Panc1 (cell line): ENCODE measurements at regions of chr1 and their contacts with region 1.

Region 1: GRCh38 chr1:155978325-155978972 is at the start of gene ARHGEF2:
- DNase-seq: no peak
- ATAC-seq: peak; percentile 85
- H3K4me3 ChIP-seq: peak within 1 kb of the TSS; percentile 82 to 89
- H3K27ac ChIP-seq: peak within 1 kb of the TSS; percentile 99
- H3K4me1 ChIP-seq: peaks cover 61% of the 10 kb centered on the region
- H3K27me3 ChIP-seq: no peaks in the 10 kb centered on the region
- CTCF ChIP-seq: no peak
- total RNA-seq, gene ARHGEF2: 87.0 TPM

Region 2: GRCh38 chr1:155744711-155745283 is 233.7 kb before region 1 on chr1:
- CTCF ChIA-PET with region 1: no interaction called
- POLR2A ChIA-PET with region 1: interaction called, 14 read pairs
- in situ Hi-C with region 1: no loop called
- intact Hi-C with region 1: no loop called
- DNase-seq: no peak
- ATAC-seq: no peak
- H3K4me3 ChIP-seq: peak overlapping the region; percentile 70 to 96
- H3K27ac ChIP-seq: peak overlapping the region; percentile 98
- H3K4me1 ChIP-seq: peaks cover 3% of the 10 kb centered on the region; the same call in 1 of the 2 replicates
- H3K27me3 ChIP-seq: no peaks in the 10 kb centered on the region
- CTCF ChIP-seq: no peak

Region 3: DNA sequence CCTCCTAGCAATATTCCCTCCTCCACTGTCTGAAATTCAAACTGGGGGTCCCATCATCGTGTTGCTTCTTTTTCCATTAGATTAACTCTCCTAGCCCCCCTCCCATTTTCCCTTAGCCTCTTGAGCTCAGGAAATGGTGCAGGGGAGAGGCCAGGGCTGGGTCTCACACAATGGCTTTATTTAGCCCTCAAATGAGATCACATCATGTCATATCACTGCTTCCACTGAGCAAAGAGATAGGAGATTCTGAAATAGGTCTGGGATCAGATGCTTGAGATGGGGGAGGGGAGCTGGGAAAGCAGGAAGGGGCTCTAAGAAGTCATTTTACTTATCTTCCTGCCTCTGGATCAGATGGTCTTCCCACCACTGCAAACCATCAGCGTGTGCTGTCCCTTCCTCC is 17.7 kb after region 1 on chr1:
- CTCF ChIA-PET with region 1: no interaction called
- POLR2A ChIA-PET with region 1: interaction called, 13 read pairs
- in situ Hi-C with region 1: no loop called
- intact Hi-C with region 1: no loop called
- DNase-seq: no peak
- ATAC-seq: no peak
- H3K4me3 ChIP-seq: no peak overlapping the region
- H3K27ac ChIP-seq: no peak overlapping the region
- H3K4me1 ChIP-seq: peaks cover 10% of the 10 kb centered on the region
- H3K27me3 ChIP-seq: no peaks in the 10 kb centered on the region
- CTCF ChIP-seq: no peak

Region 4: DNA sequence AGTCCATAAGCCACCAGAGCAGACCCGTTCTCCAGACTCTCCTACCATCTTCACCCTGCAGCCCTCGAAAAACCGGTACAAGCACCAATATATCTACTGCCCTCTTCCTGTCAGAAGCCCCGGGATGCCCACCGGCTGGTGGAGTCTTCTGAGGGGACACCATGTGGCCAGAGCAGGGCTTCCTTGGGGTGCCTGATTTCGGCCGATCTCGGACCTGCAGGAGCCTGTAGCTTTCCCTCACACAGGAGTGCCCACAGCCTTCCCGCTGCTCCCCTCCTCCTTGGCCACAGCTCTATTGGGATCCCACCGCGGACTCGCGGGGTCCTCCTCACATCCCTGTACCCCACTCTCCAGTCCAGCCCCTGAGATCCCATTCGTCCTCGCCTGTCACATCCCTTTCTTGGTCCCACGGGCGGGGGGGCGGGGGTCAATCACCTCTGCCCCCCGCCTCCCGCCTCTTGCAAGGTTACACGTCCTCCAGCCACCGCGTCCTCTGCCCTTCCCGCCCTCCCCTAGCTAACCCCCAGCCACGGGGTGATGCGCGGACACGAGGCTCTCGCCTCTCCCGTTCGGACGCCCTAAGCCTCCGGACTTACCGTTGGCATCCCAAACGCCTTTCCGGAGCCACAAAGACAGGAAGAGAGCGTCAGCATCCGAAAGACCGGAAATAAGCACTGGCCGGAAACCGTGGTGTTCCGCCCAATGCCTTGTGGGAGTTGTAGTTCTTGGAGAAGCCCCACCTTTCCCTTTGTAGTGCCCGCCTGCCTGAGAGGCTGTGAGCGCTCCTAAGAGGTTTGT is 42.0 kb after region 1 on chr1 and contains the start of gene SSR2:
- CTCF ChIA-PET with region 1: no interaction called
- POLR2A ChIA-PET with region 1: no interaction called
- in situ Hi-C with region 1: no loop called
- intact Hi-C with region 1: no loop called
- DNase-seq: peak; percentile 78
- ATAC-seq: peak; percentile 99
- H3K4me3 ChIP-seq: peak within 1 kb of the TSS; percentile 70 to 89
- H3K27ac ChIP-seq: peak within 1 kb of the TSS; percentile 81
- H3K4me1 ChIP-seq: peaks cover 6% of the 10 kb centered on the region; the same call in 1 of the 2 replicates
- H3K27me3 ChIP-seq: no peaks in the 10 kb centered on the region
- CTCF ChIP-seq: no peak
- total RNA-seq, gene SSR2: 252 TPM